HCT116 (cell line): ENCODE measurements at regions of chr3 and their contacts with region 1.

Region 1: DNA sequence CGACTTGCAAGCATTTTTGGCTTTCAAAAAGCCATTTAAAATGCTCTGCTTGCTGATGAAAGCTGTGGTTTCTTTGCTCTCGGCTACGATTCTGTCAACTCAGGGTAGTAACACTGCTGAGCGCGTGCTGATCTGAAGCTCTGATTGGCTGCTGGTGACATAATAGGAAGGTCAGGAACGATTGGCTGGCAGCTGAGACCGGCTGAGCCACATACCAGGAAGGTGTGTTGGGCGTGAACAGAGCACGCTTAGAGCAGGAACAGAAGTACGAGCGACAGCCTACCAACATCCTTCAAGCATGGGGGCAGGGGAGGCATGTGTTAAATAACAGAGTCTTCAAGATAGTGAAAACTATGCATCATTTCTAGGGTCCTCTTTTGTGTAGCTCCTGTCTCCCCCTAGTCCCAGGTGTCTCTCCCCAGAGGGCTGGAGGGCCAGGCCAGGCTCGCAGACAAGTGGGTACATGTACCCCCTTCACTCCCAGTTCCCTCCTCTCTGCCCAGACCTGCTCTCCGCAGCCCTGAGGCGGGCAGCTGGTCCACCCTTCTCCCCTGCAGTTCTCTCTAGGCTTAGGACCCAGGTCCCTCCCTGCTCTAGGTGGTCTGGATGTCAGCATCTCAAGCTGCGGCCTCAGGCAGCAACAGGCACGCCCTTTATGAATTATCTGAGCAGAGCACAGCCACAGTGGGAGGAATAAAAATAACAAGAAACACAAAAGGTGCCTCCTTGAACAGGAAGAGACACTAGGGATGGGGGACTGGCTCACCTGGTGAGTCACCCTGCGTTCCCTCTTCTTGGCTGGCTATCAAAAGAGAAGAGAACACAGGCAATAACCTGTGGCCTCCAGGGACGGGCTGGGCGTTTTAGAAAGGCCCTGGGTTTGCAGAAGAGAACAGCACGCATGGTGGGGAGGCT is 76.0 kb downstream of the TAMM41 start:
- DNase-seq: peak; percentile 87
- ATAC-seq: peak; percentile 86
- H3K4me3 ChIP-seq: peak overlapping the region; percentile 33 to 48
- H3K27ac ChIP-seq: peak overlapping the region; percentile 90
- H3K4me1 ChIP-seq: peaks cover 33 to 40% of the 10 kb centered on the region in 2 experiments
- H3K27me3 ChIP-seq: 0 out of 2 replicates have a peak, but pooled peaks cover 5% of the 10 kb centered on the region
- CTCF ChIP-seq: no peak
- POLR2A ChIP-seq: peak; percentile 29
- RAD21 ChIP-seq: no peak

Region 2: GRCh38 chr3:11140054-11140712 is 630.6 kb before region 1 on chr3:
- CTCF ChIA-PET with region 1: no interaction called
- POLR2A ChIA-PET with region 1: no interaction called
- RAD21 ChIA-PET with region 1: no interaction called
- intact Hi-C with region 1: no loop called
- DNase-seq: no peak
- ATAC-seq: no peak
- H3K4me3 ChIP-seq: peak overlapping the region in 1 of 2 experiments; percentile 34; a peak in 1 of 4 replicates
- H3K27ac ChIP-seq: peak overlapping the region; percentile 39
- H3K4me1 ChIP-seq: peaks cover 34 to 62% of the 10 kb centered on the region in 2 experiments
- H3K27me3 ChIP-seq: no peaks in the 10 kb centered on the region
- CTCF ChIP-seq: no peak
- POLR2A ChIP-seq: no peak
- RAD21 ChIP-seq: no peak

Region 3: DNA sequence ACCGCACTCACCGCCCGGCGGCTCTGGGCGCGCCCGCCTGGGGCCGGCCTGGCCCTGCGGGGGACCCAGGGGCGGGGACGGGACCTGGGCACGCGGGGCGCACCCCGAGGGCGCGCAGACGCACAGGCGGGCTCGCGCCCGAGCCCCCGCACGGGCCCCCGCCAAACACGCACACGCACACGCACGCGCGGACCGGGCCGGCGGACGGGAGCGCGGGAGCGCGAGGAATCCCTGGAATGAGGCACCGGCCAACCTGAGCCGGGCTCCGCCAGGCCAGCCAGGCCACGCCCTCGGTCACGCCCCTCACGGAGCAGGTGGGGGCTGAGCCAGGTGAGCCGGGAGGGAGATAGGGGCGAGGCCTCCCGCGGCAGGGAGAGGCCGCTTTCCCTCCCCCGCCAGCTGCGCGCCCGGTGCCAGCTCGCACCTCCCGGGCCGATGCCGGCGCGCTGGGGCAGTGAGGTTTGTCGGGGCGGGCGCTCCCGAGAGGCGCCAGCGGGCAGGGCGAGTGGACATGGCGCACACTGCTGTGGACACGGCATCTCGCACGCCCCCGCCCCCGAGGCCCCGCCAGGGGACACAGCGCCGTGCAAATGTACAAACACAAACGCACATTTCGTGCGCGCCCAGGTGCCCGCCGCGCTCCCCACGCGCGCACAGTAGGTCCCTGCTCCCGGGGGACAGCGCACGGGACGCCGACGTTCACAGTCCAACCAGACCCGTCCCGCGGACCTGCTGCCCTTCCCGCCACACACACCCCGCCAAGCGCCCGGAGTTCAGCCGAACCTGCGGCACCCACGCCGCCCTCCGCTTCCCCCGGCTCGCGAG is 51.1 kb before region 1 on chr3:
- CTCF ChIA-PET with region 1: no interaction called
- POLR2A ChIA-PET with region 1: no interaction called
- RAD21 ChIA-PET with region 1: no interaction called
- intact Hi-C with region 1: loop called (anchors 5 kb)
- DNase-seq: peak; percentile 78
- ATAC-seq: peak; percentile 86
- H3K4me3 ChIP-seq: peak overlapping the region; percentile 69 to 81
- H3K27ac ChIP-seq: peak overlapping the region; percentile 80
- H3K4me1 ChIP-seq: peaks cover 19 to 30% of the 10 kb centered on the region in 2 experiments
- H3K27me3 ChIP-seq: peaks cover 2% of the 10 kb centered on the region; the same call in 1 of the 2 replicates
- CTCF ChIP-seq: no peak
- POLR2A ChIP-seq: no peak
- RAD21 ChIP-seq: no peak